Mucosa of descending colon (tissue), 3 donors: ENCODE measurements at regions of chr2 and their contacts with region 1.

Region 1: DNA sequence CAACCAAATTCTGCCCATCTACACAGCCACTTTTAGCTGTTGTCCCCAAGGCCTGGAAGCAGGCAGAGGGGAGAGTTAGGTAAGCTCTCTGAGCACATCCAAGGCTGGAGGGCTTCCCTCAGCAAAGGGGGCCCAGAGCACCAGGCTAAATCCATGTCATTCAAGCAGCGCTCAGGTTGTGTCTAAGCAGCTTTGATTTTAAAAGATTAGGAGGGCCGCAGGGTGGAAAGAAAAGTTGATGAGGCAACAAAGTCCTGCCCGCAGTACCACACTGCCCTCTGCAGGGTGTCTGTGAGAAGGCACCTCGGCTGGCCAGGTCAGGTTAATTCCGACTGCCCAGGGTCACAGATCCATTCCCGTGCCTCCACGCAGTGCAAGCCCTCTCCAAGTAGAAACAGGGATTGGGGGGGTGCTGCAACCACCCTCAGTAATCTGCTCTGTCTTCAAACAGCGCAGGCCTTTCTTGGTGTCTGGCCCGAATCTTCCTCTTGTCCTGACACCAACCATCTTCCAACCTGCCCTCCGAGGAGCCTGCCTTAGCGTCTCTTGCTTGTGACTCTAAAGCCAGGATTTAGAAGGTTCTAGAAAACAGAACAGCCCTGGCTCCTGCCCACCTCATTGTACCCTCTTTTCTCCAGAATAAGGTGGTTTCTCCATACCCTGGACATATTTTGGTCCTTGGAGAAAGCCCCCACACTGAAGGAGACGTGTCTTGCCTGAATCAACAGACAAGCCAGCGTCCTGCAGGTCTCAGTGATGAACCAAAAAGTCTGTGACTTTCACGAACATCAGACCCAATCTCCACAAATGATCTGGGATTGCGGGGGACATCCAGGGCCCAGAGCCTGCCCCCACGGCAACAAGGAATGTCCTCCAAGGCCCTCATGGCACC is 289.2 kb downstream of the TNS1 start:
- DNase-seq: peak; percentile 65 to 78 (median 77)
- ATAC-seq: peak; percentile 82
- H3K4me3 ChIP-seq: no peak overlapping the region
- H3K4me1 ChIP-seq: no peaks in the 10 kb centered on the region
- CTCF ChIP-seq: peak; percentile 91

Region 2: GRCh38 chr2:216687646-216688045 is 1026.0 kb before region 1 on chr2:
- intact Hi-C with region 1: loop called in 1 of 2 experiments (anchors 10 kb)
- DNase-seq: no peak
- ATAC-seq: no peak
- H3K4me3 ChIP-seq: no peak overlapping the region
- H3K4me1 ChIP-seq: peaks cover 3% of the 10 kb centered on the region
- CTCF ChIP-seq: no peak

Region 3: DNA sequence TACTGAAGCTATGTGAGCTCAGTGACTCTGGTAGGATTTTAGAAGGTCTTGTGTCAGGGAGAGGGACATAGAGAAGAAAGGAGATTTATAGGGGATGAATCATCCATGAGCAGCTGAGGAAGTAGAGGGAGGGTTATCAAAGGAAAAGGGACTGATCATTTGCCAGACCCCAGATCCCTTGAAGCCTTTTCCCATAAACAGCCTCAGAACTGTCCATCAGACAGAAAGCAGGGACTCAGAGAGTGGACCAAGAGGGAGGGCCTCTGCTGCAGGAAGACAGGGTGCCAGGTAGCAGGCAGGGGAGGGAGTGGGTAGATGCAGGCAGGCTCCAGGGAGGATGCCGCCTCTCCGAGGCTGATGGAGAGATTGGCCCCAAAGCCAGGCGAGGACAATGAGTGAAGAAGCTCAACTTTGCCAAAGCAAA is 155.3 kb after region 1 on chr2:
- intact Hi-C with region 1: no loop called
- DNase-seq: no peak
- ATAC-seq: peak; percentile 8
- H3K4me3 ChIP-seq: no peak overlapping the region
- H3K4me1 ChIP-seq: no peaks in the 10 kb centered on the region
- CTCF ChIP-seq: no peak